ENCODE measurements at regions of chr3 and their contacts with region 1.

Region 1: GRCh38 chr3:58640700-58641372 is 25.7 kb downstream of the FAM3D start:
- DNase-seq: peak; percentile 71 to 83
- ATAC-seq: peak; percentile 86 to 95 (median 90)
- H3K4me3 ChIP-seq: no peak overlapping the region
- H3K27ac ChIP-seq: no peak overlapping the region
- H3K4me1 ChIP-seq: no peaks in the 10 kb centered on the region
- H3K27me3 ChIP-seq: peaks cover 0 to under 1% (median 0%) of the 10 kb centered on the region in 3 donors
- CTCF ChIP-seq: peak; percentile 81

Region 2: DNA sequence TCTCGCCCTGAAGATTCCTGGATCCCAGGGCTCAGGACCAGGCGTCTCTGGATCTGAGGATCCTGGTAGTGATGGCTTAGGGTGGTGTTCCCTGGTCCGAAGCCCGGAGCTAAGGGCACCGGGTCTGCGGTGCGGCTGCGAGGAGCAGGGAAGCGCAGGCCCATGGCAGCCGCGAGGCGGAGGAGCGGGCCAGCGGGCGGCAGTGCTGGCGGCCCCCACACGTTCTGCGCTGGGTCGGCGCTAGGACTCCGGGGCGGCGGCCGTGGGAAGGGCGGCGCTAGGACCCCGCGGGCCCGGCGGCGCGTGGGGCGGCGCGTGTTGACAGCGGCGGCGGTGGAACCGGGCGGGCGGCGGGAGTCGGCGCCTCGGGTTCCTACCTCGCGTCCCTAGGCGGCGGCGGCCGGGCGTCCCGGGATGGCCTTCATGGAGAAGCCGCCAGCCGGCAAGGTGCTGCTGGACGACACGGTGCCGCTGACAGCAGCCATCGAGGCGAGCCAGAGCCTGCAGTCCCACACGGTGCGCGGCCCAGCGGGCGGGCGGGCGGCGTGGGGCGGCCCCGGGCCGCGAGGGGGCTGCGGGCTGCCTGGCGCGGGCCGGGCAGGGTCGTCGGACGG is 308.2 kb before region 1 on chr3 and contains the start of gene PXK:
- intact Hi-C with region 1: no loop called
- DNase-seq: peak; percentile 88 to 91
- ATAC-seq: peak; percentile 95 to 98 (median 96)
- H3K4me3 ChIP-seq: peak within 1 kb of the TSS; percentile 70
- H3K27ac ChIP-seq: peak within 1 kb of the TSS; percentile 43
- H3K4me1 ChIP-seq: peaks cover 26% of the 10 kb centered on the region
- H3K27me3 ChIP-seq: no peaks in the 10 kb centered on the region
- CTCF ChIP-seq: no peak
- total RNA-seq, gene PXK: 15.5 to 17.5 (median 16.5) TPM

Region 3: DNA sequence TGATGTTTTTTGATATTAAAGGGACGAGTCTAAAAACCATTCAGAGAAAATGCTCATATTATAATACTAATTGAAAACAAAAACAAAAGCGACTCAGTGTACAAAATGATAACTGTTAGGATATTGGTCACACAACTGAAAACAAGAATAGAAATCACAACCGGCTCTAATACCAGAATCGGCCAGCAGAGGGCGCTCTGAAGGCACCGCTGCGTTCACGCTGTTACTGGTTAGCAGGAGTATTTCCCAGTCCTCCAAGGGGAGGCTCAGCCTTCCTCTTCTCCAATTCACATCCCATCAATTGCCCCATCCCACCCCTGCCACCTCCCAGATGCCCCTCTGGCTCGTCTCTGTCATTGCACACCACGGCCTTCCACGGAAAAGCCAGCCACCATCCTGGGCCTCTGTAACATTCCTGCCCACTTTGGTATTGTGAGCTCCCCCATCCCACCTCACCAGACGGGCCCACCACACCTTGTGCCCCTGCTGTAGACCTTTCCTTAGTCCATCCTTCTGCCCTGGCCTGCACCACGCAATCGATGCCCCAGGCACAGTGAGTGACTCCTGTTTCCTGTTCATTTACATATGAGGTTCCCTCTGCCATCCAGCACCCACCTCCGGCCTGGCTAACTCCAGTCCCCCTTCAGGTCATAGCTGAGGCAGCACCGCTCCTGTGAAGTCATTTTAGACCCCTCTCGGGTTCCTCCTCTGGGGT is 72.1 kb before region 1 on chr3:
- intact Hi-C with region 1: no loop called
- DNase-seq: peak; percentile 74 to 84
- ATAC-seq: peak; percentile 73 to 87 (median 77)
- H3K4me3 ChIP-seq: no peak overlapping the region
- H3K27ac ChIP-seq: no peak overlapping the region
- H3K4me1 ChIP-seq: no peaks in the 10 kb centered on the region
- H3K27me3 ChIP-seq: no peaks in the 10 kb centered on the region
- CTCF ChIP-seq: peak; percentile 95

Region 4: GRCh38 chr3:59049671-59050331 is 409.0 kb after region 1 on chr3 and contains the start of gene CFAP20DC:
- intact Hi-C with region 1: loop called in 1 of 2 experiments (anchors 10 kb)
- DNase-seq: peak; percentile 89 to 93
- ATAC-seq: peak; percentile 69 to 92 (median 88)
- H3K4me3 ChIP-seq: peak within 1 kb of the TSS; percentile 66
- H3K27ac ChIP-seq: no peak within 1 kb of the TSS
- H3K4me1 ChIP-seq: no peaks in the 10 kb centered on the region
- H3K27me3 ChIP-seq: peaks cover 0 to 2% (median 0%) of the 10 kb centered on the region in 3 donors
- CTCF ChIP-seq: no peak
- total RNA-seq, gene CFAP20DC: not detected

Region 5: GRCh38 chr3:59857589-59858346 is 1216.9 kb after region 1 on chr3:
- intact Hi-C with region 1: loop called (anchors 1 to 5 kb)
- DNase-seq: peak; percentile 77 to 79
- ATAC-seq: peak; percentile 74 to 91 (median 82)
- H3K4me3 ChIP-seq: no peak overlapping the region
- H3K27ac ChIP-seq: no peak overlapping the region
- H3K4me1 ChIP-seq: no peaks in the 10 kb centered on the region
- H3K27me3 ChIP-seq: no peaks in the 10 kb centered on the region
- CTCF ChIP-seq: peak; percentile 88

Measured in psoas muscle (tissue), 8 donors.